Activated naive CD4-positive, alpha-beta T cell treated with anti-CD3 and anti-CD28 coated beads for 36 hours (primary cell): ENCODE measurements at regions of chr5 and their contacts with region 1.

Region 1: GRCh38 chr5:65481635-65482295 is at the start of gene ADAMTS6:
- DNase-seq: peak; percentile 85
- H3K4me3 Mint-ChIP-seq: no peak within 1 kb of the TSS
- H3K27ac Mint-ChIP-seq: peak within 1 kb of the TSS; percentile 38
- H3K4me1 Mint-ChIP-seq: peaks cover 6% of the 10 kb centered on the region
- H3K27me3 Mint-ChIP-seq: no peaks in the 10 kb centered on the region
- total RNA-seq, gene ADAMTS6: 0.86 to 0.93 TPM

Region 2: GRCh38 chr5:64634997-64635686 is 846.6 kb before region 1 on chr5:
- CTCF ChIA-PET with region 1: interaction called, 4 read pairs
- intact Hi-C with region 1: loop called (anchors 1 kb)
- DNase-seq: no peak
- H3K4me3 Mint-ChIP-seq: no peak overlapping the region
- H3K27ac Mint-ChIP-seq: no peak overlapping the region
- H3K4me1 Mint-ChIP-seq: peaks cover 3% of the 10 kb centered on the region
- H3K27me3 Mint-ChIP-seq: peaks cover 13% of the 10 kb centered on the region

Region 3: DNA sequence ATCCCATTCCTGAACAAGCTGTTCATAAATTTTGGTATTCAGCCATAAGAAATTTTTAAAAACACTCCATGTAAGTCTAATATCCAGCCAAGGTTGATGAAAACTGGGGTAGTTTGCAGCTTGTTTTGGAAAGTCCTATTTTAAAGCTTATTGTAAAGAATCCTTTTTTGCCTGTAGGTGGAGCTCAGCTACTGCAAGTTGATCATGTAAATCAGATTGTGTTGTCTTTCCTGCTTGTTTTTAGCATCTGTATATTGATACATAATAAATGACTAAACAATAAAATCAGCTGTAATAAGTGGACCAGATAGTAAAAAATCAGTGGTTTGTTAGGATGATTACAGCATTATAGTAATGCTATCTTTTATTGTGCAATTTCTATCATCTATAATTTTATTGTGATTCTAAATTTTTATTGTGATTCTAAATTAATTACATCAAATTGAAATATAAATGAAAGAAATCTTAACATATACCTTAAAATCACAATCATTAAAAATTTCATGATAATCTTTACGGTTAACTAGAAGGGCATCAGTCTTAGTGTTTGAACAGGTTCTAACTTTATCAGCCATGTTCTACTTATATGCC is 670.6 kb before region 1 on chr5:
- CTCF ChIA-PET with region 1: interaction called, 36 read pairs
- intact Hi-C with region 1: loop called (anchors 1 kb)
- DNase-seq: peak; percentile 8
- H3K4me3 Mint-ChIP-seq: no peak overlapping the region
- H3K27ac Mint-ChIP-seq: no peak overlapping the region
- H3K4me1 Mint-ChIP-seq: peaks cover 4% of the 10 kb centered on the region
- H3K27me3 Mint-ChIP-seq: no peaks in the 10 kb centered on the region

Region 4: GRCh38 chr5:65076251-65076869 is 405.4 kb before region 1 on chr5:
- CTCF ChIA-PET with region 1: interaction called, 8 read pairs
- intact Hi-C with region 1: loop called (anchors 1 kb)
- DNase-seq: peak; percentile 65
- H3K4me3 Mint-ChIP-seq: no peak overlapping the region
- H3K27ac Mint-ChIP-seq: no peak overlapping the region
- H3K4me1 Mint-ChIP-seq: peaks cover 8% of the 10 kb centered on the region
- H3K27me3 Mint-ChIP-seq: no peaks in the 10 kb centered on the region

Region 5: GRCh38 chr5:65209341-65209740 is 272.4 kb before region 1 on chr5:
- CTCF ChIA-PET with region 1: interaction called, 3 read pairs
- intact Hi-C with region 1: loop called (anchors 5 kb)
- DNase-seq: no peak
- H3K4me3 Mint-ChIP-seq: no peak overlapping the region
- H3K27ac Mint-ChIP-seq: no peak overlapping the region
- H3K4me1 Mint-ChIP-seq: no peaks in the 10 kb centered on the region
- H3K27me3 Mint-ChIP-seq: no peaks in the 10 kb centered on the region

Region 6: GRCh38 chr5:65535529-65535987 is 53.8 kb after region 1 on chr5:
- CTCF ChIA-PET with region 1: no interaction called
- intact Hi-C with region 1: no loop called
- DNase-seq: no peak
- H3K4me3 Mint-ChIP-seq: no peak overlapping the region
- H3K27ac Mint-ChIP-seq: no peak overlapping the region
- H3K4me1 Mint-ChIP-seq: no peaks in the 10 kb centered on the region
- H3K27me3 Mint-ChIP-seq: no peaks in the 10 kb centered on the region

Region 7: DNA sequence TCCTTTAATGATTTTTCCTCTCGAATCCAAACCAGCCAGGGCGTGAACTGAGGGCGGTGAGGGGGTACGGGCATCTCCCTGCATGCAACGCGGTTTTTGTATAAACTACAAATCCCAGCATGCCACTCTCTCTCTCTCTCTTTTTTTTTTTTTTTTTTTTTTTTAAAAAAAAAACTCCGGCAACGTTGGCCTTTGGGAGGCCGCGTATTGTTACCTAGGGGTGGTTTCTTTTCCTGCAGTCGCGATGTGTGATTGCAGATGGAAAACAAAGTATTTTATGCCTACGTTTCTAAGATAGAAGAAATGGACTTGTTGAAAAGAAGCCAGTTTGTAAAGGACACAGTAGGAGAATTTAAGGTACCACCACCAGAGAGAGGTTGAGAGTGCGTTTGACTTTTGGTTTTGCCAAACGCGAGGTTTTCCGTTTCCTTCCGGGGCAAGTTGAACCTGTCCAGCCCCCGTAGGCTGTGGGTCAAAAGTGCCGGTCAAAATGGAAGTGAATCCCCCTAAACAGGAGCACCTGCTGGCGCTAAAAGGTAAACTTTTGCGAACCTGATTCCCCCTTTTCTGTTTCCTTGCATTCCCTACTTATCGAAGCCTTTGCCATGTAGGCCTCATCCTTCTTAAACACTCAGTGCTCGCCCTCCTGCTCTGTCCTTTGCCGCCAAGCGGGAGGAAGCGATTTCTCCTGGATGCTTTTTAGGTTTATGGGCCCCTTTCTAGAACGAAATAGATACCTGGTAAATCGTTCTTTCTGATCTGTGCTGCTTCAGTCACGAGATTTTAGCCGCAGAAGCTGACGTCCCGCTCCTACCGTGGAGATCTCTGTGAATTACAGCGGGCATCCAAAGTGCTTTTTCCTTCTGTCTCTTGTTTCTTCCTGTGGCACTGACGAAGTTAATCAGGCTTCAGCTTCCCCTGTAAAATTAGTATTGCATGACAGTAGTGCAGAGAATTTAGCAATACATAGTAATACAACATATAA is 143.1 kb after region 1 on chr5 and contains the starts of genes SHLD3 and TRAPPC13:
- CTCF ChIA-PET with region 1: no interaction called
- intact Hi-C with region 1: loop called (anchors 2 kb)
- DNase-seq: peak; percentile 88
- H3K4me3 Mint-ChIP-seq: peak within 1 kb of the TSS; percentile 99
- H3K27ac Mint-ChIP-seq: peak within 1 kb of the TSS; percentile 94
- H3K4me1 Mint-ChIP-seq: peaks cover 50% of the 10 kb centered on the region
- H3K27me3 Mint-ChIP-seq: no peaks in the 10 kb centered on the region
- total RNA-seq, gene SHLD3: 2.9 to 3.1 TPM
- total RNA-seq, gene TRAPPC13: 25.7 to 29.0 TPM

Region 8: DNA sequence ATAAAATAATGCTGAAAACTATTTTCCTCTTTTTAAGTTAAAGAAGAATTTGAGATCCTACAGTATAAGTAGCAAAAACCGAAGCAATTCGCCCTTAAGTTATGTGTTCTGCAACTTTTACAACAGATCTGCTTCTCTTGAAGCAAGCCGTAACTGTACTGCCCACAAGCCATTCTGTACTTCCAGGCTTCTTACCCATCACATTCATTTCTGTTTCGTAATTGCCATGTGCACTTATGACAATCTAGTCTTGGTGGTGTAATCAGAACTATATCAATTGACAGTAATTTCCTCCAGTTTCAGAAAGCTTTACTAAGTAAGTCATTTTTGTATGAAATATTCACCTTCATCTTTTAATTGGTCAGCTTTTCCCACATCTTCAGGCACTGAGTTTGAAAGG is 226.4 kb after region 1 on chr5:
- CTCF ChIA-PET with region 1: no interaction called
- intact Hi-C with region 1: no loop called
- DNase-seq: no peak
- H3K4me3 Mint-ChIP-seq: no peak overlapping the region
- H3K27ac Mint-ChIP-seq: no peak overlapping the region
- H3K4me1 Mint-ChIP-seq: peaks cover 12% of the 10 kb centered on the region
- H3K27me3 Mint-ChIP-seq: no peaks in the 10 kb centered on the region